ENCODE measurements at regions of chr1 and their contacts with region 1.

Region 1: GRCh38 chr1:226332947-226333346 is 24.0 kb upstream of the LIN9 start:
- DNase-seq: no peak
- ATAC-seq: no peak
- H3K4me3 ChIP-seq: peak overlapping the region; percentile 58; the same call in 1 of the 2 replicates
- H3K27ac ChIP-seq: no peak overlapping the region; the same call in 1 of the 2 replicates
- H3K4me1 ChIP-seq: no peaks in the 10 kb centered on the region
- H3K27me3 ChIP-seq: no peaks in the 10 kb centered on the region
- CTCF ChIP-seq: no peak
- EP300 ChIP-seq: no peak
- POLR2A ChIP-seq: no peak
- RAD21 ChIP-seq: no peak

Region 2: DNA sequence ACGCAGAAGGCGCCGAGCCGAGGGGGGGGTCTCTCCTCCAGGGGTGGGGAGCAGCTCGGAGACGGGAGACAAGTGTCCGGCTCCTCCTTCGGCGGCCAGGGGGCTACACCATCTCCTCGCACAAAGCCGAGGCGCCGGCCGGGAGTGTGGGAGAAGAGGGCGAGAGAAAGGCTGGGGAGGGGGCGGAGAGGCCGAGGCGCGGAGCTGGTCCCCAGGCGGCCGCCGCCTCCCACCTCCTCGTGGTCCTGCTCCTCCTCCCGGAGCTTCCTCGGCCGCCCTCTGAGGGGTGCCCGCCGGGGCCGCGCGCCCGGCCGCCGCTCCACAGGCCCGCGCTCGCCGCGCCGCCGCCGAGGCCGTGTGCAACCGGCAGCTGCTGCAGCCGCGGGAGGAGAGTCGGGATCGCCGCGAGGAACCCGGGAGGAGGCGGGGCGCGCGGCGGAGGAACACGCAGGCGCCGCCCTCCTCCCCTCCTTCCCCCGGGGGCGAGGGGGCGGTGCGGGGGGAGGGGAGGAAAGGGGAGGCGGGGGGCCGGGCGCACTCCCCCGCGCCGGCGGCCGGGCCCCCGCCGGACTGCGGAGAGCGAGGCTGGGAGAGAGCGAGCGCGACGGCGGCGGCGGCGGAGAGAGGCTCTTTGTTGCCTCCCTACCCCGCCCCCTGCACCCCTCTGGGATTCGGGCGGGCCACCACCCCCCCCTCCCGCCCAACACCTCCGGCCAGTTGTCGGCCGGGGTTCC is 680.1 kb before region 1 on chr1 and contains the start of gene ENAH:
- CTCF ChIA-PET with region 1: no interaction called
- POLR2A ChIA-PET with region 1: no interaction called
- RAD21 ChIA-PET with region 1: no interaction called
- SMC1A ChIA-PET with region 1: no interaction called
- in situ Hi-C with region 1: no loop called
- intact Hi-C with region 1: no loop called
- DNase-seq: no peak
- ATAC-seq: peak; percentile 82
- H3K4me3 ChIP-seq: peak within 1 kb of the TSS; percentile 35
- H3K27ac ChIP-seq: no peak within 1 kb of the TSS
- H3K4me1 ChIP-seq: peaks cover 3% of the 10 kb centered on the region; the same call in 1 of the 2 replicates
- H3K27me3 ChIP-seq: peaks cover 6 to 15% of the 10 kb centered on the region in 2 experiments
- CTCF ChIP-seq: no peak
- EP300 ChIP-seq: no peak
- POLR2A ChIP-seq: no peak
- RAD21 ChIP-seq: no peak
- polyA plus RNA-seq, gene ENAH: not detected

Region 3: DNA sequence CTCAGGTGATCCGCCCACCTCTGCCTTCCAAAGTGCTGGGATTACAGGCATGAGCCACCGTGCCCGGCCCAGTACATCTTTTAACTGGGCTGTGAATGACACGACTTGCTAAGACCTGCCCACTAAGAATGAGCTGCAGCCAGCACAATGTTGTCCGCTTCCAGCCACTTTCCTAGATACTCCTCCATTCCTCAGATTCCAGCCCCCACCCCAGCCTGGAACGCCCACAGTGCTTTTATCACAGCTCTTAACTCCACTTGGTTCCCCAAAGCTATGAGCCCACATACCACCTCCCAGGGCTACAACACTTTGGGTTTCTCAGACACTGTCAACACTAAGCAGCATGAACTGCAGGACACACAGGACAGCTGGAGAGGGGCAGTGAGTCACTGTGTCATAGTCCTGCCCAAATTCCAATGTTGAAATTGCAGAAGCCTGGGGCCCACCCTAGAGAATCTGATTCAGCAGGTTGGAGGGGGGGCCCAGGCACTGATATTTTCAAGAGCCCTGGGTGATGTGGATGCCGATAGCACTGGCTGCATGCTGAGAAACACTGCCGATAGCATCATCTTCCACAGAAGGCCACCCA is 204.4 kb before region 1 on chr1:
- CTCF ChIA-PET with region 1: interaction called, 75 read pairs
- POLR2A ChIA-PET with region 1: interaction called, 6 read pairs
- RAD21 ChIA-PET with region 1: interaction called, 30 read pairs
- SMC1A ChIA-PET with region 1: interaction called, 55 read pairs
- in situ Hi-C with region 1: no loop called
- intact Hi-C with region 1: loop called (anchors 1 kb)
- DNase-seq: no peak
- ATAC-seq: no peak
- H3K4me3 ChIP-seq: peak overlapping the region; percentile 70
- H3K27ac ChIP-seq: peak overlapping the region; percentile 79
- H3K4me1 ChIP-seq: peaks cover 41% of the 10 kb centered on the region
- H3K27me3 ChIP-seq: no peaks in the 10 kb centered on the region
- CTCF ChIP-seq: no peak
- EP300 ChIP-seq: no peak
- POLR2A ChIP-seq: no peak
- RAD21 ChIP-seq: no peak

Region 4: GRCh38 chr1:226186124-226187018 is 146.6 kb before region 1 on chr1 and contains the start of gene ACBD3:
- CTCF ChIA-PET with region 1: interaction called, 21 read pairs
- POLR2A ChIA-PET with region 1: no interaction called
- RAD21 ChIA-PET with region 1: interaction called, 6 read pairs
- SMC1A ChIA-PET with region 1: no interaction called
- in situ Hi-C with region 1: no loop called
- intact Hi-C with region 1: no loop called
- DNase-seq: peak; percentile 41
- ATAC-seq: peak; percentile 92
- H3K4me3 ChIP-seq: peak within 1 kb of the TSS; percentile 94
- H3K27ac ChIP-seq: peak within 1 kb of the TSS; percentile 88
- H3K4me1 ChIP-seq: peaks cover 7% of the 10 kb centered on the region; the same call in 1 of the 2 replicates
- H3K27me3 ChIP-seq: no peaks in the 10 kb centered on the region
- CTCF ChIP-seq: no peak; a peak in 1 of 6 replicates
- EP300 ChIP-seq: no peak
- POLR2A ChIP-seq: peak; percentile 100
- RAD21 ChIP-seq: no peak
- polyA plus RNA-seq, gene ACBD3: 7.5 to 8.9 TPM

Region 5: GRCh38 chr1:226201029-226201593 is 131.8 kb before region 1 on chr1:
- CTCF ChIA-PET with region 1: interaction called, 82 read pairs
- POLR2A ChIA-PET with region 1: no interaction called
- RAD21 ChIA-PET with region 1: interaction called, 46 read pairs
- SMC1A ChIA-PET with region 1: interaction called, 35 read pairs
- in situ Hi-C with region 1: no loop called
- intact Hi-C with region 1: loop called (anchors 1 kb)
- DNase-seq: no peak
- ATAC-seq: peak; percentile 80
- H3K4me3 ChIP-seq: no peak overlapping the region
- H3K27ac ChIP-seq: no peak overlapping the region
- H3K4me1 ChIP-seq: peaks cover 3% of the 10 kb centered on the region; the same call in 1 of the 2 replicates
- H3K27me3 ChIP-seq: no peaks in the 10 kb centered on the region; a peak in 1 of 4 replicates
- CTCF ChIP-seq: peak; percentile 59 to 67 (median 60)
- EP300 ChIP-seq: no peak
- POLR2A ChIP-seq: no peak
- RAD21 ChIP-seq: peak; percentile 72

Region 6: GRCh38 chr1:226308723-226309315 is 24.1 kb before region 1 on chr1 and contains the start of gene LIN9:
- CTCF ChIA-PET with region 1: interaction called, 19 read pairs
- POLR2A ChIA-PET with region 1: interaction called, 4 read pairs
- RAD21 ChIA-PET with region 1: interaction called, 9 read pairs
- SMC1A ChIA-PET with region 1: interaction called, 7 read pairs
- in situ Hi-C with region 1: no loop called
- intact Hi-C with region 1: no loop called
- DNase-seq: peak; percentile 46
- ATAC-seq: peak; percentile 84
- H3K4me3 ChIP-seq: peak within 1 kb of the TSS; percentile 98
- H3K27ac ChIP-seq: peak within 1 kb of the TSS; percentile 92
- H3K4me1 ChIP-seq: peaks cover 3% of the 10 kb centered on the region; the same call in 1 of the 2 replicates
- H3K27me3 ChIP-seq: no peaks in the 10 kb centered on the region
- CTCF ChIP-seq: no peak
- EP300 ChIP-seq: no peak
- POLR2A ChIP-seq: peak; percentile 92
- RAD21 ChIP-seq: no peak
- polyA plus RNA-seq, gene LIN9: 5.9 to 6.5 TPM

Region 7: DNA sequence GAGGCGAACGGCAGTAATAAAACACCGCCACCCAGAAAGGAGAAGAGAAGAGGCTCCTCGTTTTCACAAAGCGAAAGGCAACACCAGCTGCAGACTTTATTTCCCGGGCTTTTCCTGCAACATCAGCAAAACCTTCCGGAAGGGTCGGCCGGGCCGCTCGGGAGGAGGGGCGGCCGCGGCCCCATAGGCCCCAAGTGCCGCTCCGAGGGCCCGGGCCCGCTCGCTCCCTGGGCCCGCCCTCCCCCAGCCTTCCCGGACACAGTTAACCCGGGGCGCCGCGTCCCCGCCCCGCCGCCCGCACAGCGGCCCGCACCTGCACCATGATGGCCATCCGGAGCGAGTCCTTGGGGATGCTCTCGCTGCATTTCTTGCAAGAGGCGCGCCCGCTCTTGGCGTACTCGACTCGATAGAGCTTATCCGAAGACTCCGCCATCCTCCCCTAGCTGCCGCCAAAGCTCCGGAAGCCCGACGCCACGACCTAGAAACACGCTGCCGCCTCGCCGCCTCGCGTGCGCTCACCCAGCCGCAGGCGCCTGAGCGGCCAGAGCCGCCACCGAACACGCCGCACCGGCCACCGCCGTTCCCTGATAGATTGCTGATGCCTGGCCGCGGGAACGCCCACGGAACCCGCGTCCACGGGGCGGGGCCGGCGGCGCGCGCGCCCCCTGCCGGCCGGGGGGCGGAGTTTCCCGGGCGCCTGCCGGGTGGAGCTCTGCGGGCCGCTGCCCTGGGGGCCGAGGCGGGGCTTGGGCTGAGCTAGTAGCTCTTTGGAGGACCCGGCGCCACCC is 74.7 kb after region 1 on chr1 and contains the start of gene PARP1:
- CTCF ChIA-PET with region 1: interaction called, 15 read pairs
- POLR2A ChIA-PET with region 1: no interaction called
- RAD21 ChIA-PET with region 1: interaction called, 8 read pairs
- SMC1A ChIA-PET with region 1: interaction called, 3 read pairs
- in situ Hi-C with region 1: no loop called
- intact Hi-C with region 1: no loop called
- DNase-seq: no peak
- ATAC-seq: peak; percentile 85
- H3K4me3 ChIP-seq: peak within 1 kb of the TSS; percentile 86
- H3K27ac ChIP-seq: peak within 1 kb of the TSS; percentile 77
- H3K4me1 ChIP-seq: peaks cover 22% of the 10 kb centered on the region
- H3K27me3 ChIP-seq: no peaks in the 10 kb centered on the region
- CTCF ChIP-seq: peak; percentile 33 to 83 (median 71); a peak in 5 of 6 replicates
- EP300 ChIP-seq: no peak; a peak in 1 of 4 replicates
- POLR2A ChIP-seq: peak; percentile 86
- RAD21 ChIP-seq: no peak
- polyA plus RNA-seq, gene PARP1: 113 to 170 TPM